ENCODE measurements at regions of chr17 and their contacts with region 1.

Region 1: GRCh38 chr17:50783193-50783660 is 15.9 kb upstream of the ANKRD40CL start:
- DNase-seq: peak; percentile 77 to 98 (median 92)

Region 2: GRCh38 chr17:50828508-50829170 is 45.4 kb after region 1 on chr17:
- intact Hi-C with region 1: no loop called
- DNase-seq: peak in 3 of 10 donors; percentile 27 to 43 (median 32)

Region 3: DNA sequence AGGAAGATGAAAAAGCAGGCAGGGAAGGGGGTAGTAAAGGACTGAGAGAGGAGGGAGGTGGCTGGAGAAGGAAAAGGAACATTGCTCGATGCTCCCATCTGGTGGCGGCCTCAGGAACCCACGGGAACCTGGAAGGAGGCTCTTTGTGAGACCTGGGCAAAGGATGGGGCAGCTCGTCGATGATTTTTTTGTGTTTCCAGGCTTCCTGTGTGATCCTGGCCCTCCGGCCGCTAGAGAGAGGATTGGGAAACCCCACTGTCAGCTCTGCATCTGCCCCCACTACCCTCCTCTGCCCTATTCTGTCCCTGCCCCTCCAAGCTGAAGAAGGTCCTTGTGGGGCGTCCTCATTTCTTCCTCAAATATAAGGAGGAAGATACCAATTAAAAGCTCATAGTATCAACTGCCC is 58.7 kb after region 1 on chr17:
- intact Hi-C with region 1: loop called (anchors 1 kb)
- DNase-seq: peak; percentile 66 to 97 (median 88)

Region 4: DNA sequence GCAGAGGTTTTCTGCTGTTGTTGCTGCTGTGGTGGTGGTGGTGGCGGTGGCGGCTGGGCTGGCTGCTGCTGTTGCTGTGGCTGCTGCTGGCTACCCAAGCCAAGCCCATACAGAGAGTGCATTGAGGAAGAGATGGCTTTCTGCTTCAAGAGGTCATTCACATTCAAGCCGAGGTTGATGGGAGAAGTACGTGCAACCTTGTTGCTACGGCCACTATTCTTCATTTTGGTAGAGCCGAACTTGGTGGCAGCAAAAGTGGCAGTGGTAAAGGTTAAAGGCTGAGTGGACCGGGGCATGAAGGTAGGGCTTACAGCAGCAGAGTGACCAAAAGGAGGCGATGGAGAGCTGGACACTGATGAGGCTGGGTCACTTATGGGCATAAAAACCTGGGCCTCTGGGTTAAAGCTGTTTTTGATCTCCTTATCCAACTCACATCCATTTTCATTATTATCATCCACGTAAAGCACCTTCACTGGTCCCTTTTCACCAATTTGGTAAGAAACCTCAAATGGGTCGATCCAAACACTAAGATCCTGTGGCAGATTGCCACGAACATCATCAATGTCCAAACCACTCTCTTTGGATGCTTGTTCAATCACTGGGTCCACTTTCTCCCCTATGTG is 80.1 kb after region 1 on chr17:
- intact Hi-C with region 1: no loop called
- DNase-seq: peak in 7 of 10 donors; percentile 46 to 91 (median 68)

Region 5: GRCh38 chr17:50956750-50957523 is 173.7 kb after region 1 on chr17:
- intact Hi-C with region 1: loop called (anchors 5 kb)
- DNase-seq: peak in 9 of 10 donors; percentile 35 to 93 (median 66)

Measured in posterior cingulate gyrus (tissue), 11 donors.